ENCODE measurements at regions of chr19 and their contacts with region 1.

Region 1: GRCh38 chr19:53671663-53672062 is 39.9 kb downstream of the DPRX start:
- DNase-seq: peak; percentile 28
- ATAC-seq: no peak
- H3K4me3 ChIP-seq: no peak overlapping the region
- H3K27ac ChIP-seq: no peak overlapping the region
- H3K4me1 ChIP-seq: peaks cover 8% of the 10 kb centered on the region
- H3K27me3 ChIP-seq: no peaks in the 10 kb centered on the region; a peak in 1 of 5 replicates
- CTCF ChIP-seq: peak; percentile 61
- EP300 ChIP-seq: no peak
- POLR2A ChIP-seq: no peak
- RAD21 ChIP-seq: peak; percentile 34; the same call in 1 of the 2 replicates

Region 2: DNA sequence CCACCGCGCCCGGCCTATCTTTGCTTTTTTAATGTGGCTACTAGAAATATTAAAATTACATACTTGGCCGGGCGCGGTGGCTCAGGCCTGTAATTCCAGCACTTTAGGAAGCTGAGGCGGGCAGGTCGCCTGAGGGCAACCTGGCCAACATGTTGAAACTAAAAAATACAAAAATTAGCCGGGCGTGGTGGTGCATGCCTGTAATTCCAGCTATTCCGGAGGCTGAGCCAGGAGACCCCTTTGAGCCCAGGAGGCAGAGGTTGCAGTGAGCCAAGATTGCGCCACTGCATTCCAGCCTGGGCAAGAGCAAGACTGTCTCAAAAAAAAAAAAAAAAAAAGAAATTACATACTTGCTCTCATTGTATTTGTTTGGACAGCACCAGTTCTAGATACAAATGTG is 74.6 kb before region 1 on chr19:
- CTCF ChIA-PET with region 1: no interaction called
- POLR2A ChIA-PET with region 1: no interaction called
- in situ Hi-C with region 1: no loop called
- intact Hi-C with region 1: loop called (anchors 1 kb)
- DNase-seq: peak; percentile 63
- ATAC-seq: peak; percentile 53; the same call in 2 of the 3 replicates
- H3K4me3 ChIP-seq: no peak overlapping the region
- H3K27ac ChIP-seq: no peak overlapping the region
- H3K4me1 ChIP-seq: peaks cover 46% of the 10 kb centered on the region
- H3K27me3 ChIP-seq: no peaks in the 10 kb centered on the region
- CTCF ChIP-seq: no peak
- EP300 ChIP-seq: peak in 1 of 2 experiments; percentile 50; a peak in 1 of 4 replicates
- POLR2A ChIP-seq: no peak
- RAD21 ChIP-seq: no peak

Region 3: DNA sequence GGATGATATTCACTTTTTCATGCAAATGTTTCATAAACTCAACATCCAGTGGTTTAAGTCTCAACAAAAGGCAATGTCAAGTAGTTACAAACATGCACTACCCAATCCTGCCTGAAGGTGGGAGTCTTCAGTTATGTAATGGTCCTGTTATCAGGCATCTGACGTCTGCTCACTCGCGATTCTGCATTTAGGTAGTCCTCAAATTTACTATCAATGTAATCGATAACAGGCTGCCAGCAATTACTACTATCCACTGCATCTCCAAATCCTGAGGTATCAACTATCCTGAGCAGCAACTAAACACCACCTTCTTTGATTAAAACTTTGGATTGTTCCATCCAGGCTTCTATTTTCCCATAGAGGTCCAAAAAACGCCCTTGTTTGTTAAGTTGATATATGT is 101.3 kb after region 1 on chr19:
- CTCF ChIA-PET with region 1: no interaction called
- POLR2A ChIA-PET with region 1: no interaction called
- in situ Hi-C with region 1: no loop called
- intact Hi-C with region 1: no loop called
- DNase-seq: peak; percentile 67
- ATAC-seq: no peak
- H3K4me3 ChIP-seq: no peak overlapping the region
- H3K27ac ChIP-seq: no peak overlapping the region
- H3K4me1 ChIP-seq: peaks cover 13% of the 10 kb centered on the region
- H3K27me3 ChIP-seq: no peaks in the 10 kb centered on the region
- CTCF ChIP-seq: peak; percentile 84
- EP300 ChIP-seq: no peak
- POLR2A ChIP-seq: no peak
- RAD21 ChIP-seq: no peak

Measured in HepG2 (cell line).